ENCODE measurements at regions of chr17 and their contacts with region 1.

Region 1: DNA sequence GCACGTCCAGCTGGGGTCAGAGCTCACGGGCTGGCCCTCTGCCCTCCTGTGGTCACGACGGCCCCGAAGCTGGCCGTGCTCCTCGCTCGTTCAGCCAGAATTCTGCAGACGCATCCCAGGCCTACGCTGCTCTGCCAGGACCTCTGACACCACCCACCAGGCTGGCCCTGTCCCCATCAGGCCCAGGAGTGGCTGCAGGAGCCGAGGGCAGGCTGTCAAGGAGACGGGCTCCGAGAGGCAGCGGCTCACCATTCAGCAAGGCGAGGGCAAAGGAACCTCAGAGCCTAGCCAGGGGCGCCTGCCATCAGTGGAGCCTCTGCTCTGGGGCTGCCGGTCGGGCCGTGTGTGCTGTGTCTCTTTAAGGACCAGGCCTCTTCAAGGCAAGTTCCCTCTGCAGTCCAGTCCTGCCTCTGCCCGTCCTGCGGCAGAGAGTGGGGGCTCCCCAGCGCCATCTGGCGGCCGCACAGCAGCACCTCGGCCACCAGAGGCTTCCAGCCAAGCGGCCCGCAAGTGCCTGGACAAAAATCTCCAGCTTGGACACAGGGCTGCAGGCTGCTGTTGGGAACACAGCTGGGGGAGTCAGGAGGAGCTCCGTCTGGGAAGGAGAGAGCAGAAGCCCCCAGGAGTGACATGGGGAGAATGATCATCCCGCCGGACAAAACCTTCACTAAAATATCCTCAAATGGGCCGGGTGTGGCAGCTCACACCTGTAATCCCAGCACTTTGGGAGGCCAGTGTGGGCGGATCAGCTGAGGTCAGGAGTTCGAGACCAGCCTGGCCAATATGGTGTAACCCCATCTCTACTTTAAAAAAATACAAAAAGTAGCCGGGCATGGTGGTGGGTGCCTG is 7.4 kb upstream of the ABR start:
- H3K4me3 Mint-ChIP-seq: peak overlapping the region; percentile 66
- H3K27ac Mint-ChIP-seq: peak overlapping the region; percentile 73
- H3K4me1 Mint-ChIP-seq: peaks cover 90% of the 10 kb centered on the region
- H3K27me3 Mint-ChIP-seq: no peaks in the 10 kb centered on the region

Region 2: DNA sequence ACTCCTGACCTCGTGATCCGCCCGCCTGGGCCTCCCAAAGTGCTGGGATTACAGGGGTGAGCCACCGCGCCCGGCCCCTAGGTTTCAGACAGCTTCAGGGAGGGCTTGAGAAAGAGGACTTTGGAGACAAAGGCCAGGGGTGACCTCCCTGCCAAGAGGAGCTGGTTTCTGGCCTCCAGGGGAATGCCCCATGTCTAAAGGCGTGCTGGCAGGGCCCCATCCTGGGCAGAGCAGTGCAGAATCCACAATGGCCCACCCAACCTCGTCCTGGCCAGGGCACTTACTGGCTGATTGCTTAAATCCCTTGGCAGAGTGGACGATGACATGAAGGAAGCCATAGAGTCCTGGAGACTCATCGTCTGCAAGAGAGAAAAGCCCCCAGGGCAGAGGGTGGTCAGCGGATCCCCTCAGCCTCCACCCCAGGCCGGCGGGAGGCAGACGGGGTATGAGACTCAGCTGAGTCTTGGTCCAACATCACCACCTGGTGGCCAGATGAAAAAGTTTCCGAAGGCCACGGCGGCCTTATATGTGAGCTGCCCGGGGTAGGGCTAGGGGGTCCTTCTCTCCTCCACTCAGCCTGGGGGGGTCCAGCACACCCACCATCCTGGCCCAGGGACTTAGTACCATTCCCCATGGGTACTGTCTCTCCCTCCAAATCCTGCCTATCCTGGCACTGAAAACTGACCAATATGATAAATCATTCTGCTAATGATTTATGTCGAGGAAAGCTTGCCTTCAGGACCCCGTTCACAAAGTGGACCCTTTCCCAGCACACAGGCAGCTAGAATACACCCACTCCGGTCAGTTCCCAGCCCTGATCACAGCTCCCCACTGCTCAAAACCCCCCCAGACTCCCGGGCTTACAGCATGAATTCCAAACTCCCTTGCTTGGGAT is 131.1 kb before region 1 on chr17:
- intact Hi-C with region 1: loop called (anchors 5 kb)
- H3K4me3 Mint-ChIP-seq: no peak overlapping the region
- H3K27ac Mint-ChIP-seq: peak overlapping the region; percentile 14
- H3K4me1 Mint-ChIP-seq: peaks cover 25% of the 10 kb centered on the region
- H3K27me3 Mint-ChIP-seq: no peaks in the 10 kb centered on the region

Region 3: DNA sequence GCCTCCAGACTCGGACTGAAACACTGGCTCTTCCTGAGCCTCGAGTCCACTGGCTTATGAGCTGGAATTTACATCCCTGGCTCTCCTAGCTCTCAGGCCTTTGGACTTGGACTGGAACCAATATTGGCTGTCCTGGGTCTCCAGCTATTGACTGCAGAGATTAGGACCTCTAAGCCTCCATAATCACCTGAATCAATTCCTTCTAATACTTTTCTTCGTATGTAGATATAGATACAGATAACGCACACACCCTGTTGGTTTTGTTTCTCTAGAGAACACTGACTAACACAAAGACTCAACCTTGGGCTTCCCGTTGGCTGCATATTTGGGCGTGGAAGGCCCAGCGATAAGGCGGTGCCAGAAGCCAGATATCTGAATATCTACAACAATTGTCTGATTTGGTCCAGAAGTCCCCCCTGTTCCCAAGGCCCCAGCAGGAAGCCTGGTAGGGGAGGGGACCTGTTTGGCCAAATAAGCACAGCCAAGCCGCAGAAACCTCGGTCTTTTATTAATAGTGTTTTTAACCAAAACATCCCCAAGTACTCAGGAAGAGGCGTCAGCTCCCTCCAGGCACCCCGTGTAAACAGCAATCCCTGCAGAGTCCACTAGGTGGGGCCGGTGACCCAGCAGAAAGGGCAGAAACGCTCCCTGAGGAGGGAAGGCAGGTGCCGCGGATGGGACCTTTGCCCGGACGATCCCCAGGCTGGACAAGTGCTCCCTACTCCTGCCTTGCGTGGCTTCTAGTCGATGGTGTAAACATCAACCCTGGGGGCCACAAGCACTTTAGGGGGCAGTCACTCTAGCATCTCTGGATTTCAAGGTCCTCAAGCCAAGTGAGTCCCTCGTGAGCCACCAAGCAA is 64.4 kb before region 1 on chr17:
- intact Hi-C with region 1: loop called (anchors 2 kb)
- H3K4me3 Mint-ChIP-seq: no peak overlapping the region
- H3K27ac Mint-ChIP-seq: no peak overlapping the region
- H3K4me1 Mint-ChIP-seq: peaks cover 37% of the 10 kb centered on the region
- H3K27me3 Mint-ChIP-seq: no peaks in the 10 kb centered on the region

Region 4: DNA sequence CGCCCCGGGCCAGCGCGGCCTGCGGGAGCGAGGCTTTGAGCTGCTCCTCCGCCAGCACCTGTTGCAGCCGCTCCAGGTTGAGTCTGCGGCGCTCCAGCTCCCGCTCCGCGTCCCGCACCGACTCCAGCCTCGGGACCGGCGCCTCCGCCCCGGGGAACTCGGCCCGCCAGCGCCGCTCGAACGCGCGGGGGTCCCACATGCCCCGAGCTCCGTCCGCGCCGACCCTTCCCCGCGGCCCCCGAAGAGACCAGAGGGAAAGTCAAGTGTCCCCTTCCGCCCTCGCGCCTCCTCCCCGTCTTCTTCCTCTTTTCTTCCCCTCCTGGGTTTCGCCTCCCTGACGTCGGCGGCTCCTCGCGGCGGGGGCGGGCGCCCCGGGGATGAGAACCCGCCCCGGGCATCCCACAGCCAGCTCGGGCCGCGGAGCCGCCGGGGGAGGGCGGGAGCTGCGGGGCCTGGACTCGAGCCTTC is 42.3 kb after region 1 on chr17:
- intact Hi-C with region 1: loop called (anchors 5 kb)
- H3K4me3 Mint-ChIP-seq: peak overlapping the region; percentile 96
- H3K27ac Mint-ChIP-seq: peak overlapping the region; percentile 97
- H3K4me1 Mint-ChIP-seq: peaks cover 76% of the 10 kb centered on the region
- H3K27me3 Mint-ChIP-seq: no peaks in the 10 kb centered on the region

Region 5: GRCh38 chr17:1882836-1883235 is 695.7 kb after region 1 on chr17:
- intact Hi-C with region 1: no loop called
- H3K4me3 Mint-ChIP-seq: no peak overlapping the region
- H3K27ac Mint-ChIP-seq: no peak overlapping the region
- H3K4me1 Mint-ChIP-seq: no peaks in the 10 kb centered on the region
- H3K27me3 Mint-ChIP-seq: no peaks in the 10 kb centered on the region

Measured in dendritic cell treated with granulocyte-macrophage colony-stimulating factor and Interleukin-4, amounts not matched to agents 40 ng/mL and 50 ng/mL, for 4 days (primary cell).